Activated CD8-positive, alpha-beta memory T cell treated with anti-CD3 and anti-CD28 coated beads, Interleukin-2, amount 10 ng/mL, durations not matched to agents 7 days and 5 days (primary cell): ENCODE measurements at regions of chr7 and their contacts with region 1.

Region 1: GRCh38 chr7:128874140-128875031 is 11.7 kb downstream of the ATP6V1F start:
- DNase-seq: no peak
- ATAC-seq: no peak
- H3K4me3 Mint-ChIP-seq: no peak overlapping the region
- H3K27ac Mint-ChIP-seq: no peak overlapping the region
- H3K4me1 Mint-ChIP-seq: peaks cover 14% of the 10 kb centered on the region
- H3K27me3 Mint-ChIP-seq: peaks cover 21% of the 10 kb centered on the region

Region 2: DNA sequence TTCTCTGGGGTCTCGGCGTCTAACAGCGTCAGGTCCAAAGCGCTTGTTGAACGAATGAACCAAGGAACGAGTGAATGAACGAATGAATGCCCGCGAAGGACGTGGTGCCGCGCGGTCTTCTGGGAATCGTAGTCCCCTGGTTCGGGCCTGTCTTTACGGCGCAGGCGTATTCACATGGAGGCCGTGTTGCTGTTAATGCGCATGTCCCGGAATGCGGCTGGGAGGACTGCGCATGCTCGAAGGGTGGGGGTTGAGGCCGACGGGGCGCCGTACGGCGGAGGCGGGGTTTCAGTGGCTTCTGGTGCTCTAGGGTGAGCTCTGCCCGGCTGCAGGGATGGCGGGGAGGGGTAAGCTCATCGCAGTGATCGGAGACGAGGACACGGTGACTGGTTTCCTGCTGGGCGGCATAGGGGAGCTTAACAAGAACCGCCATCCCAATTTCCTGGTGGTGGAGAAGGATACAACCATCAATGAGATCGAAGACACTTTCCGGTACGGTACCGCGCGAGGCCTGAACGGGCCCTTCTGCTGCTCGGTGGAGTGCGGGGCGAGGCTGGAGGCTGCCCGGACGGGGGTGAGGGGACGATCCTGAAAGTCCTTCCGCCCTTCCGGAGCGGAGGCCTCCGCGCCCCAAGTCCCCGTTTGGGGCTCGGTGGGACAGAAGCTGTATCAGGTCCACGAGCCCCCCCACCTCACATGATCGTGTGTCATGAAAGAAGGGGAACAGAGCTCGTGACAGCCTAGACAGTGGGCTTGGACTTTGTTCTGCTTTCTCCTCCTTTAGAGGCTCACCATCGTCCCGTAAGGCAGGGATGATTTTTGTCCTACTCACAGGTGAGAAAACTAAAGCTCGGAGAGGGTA is 11.6 kb before region 1 on chr7 and contains the start of gene ATP6V1F:
- CTCF ChIA-PET with region 1: interaction called, 107 read pairs
- DNase-seq: peak; percentile 99
- ATAC-seq: peak; percentile 93
- H3K4me3 Mint-ChIP-seq: peak within 1 kb of the TSS; percentile 88
- H3K27ac Mint-ChIP-seq: peak within 1 kb of the TSS; percentile 95
- H3K4me1 Mint-ChIP-seq: peaks cover 15% of the 10 kb centered on the region
- H3K27me3 Mint-ChIP-seq: no peaks in the 10 kb centered on the region
- total RNA-seq, gene ATP6V1F: 127 to 158 TPM